Sigmoid colon (tissue), 7 donors: ENCODE measurements at regions of chr2 and their contacts with region 1.

Region 1: DNA sequence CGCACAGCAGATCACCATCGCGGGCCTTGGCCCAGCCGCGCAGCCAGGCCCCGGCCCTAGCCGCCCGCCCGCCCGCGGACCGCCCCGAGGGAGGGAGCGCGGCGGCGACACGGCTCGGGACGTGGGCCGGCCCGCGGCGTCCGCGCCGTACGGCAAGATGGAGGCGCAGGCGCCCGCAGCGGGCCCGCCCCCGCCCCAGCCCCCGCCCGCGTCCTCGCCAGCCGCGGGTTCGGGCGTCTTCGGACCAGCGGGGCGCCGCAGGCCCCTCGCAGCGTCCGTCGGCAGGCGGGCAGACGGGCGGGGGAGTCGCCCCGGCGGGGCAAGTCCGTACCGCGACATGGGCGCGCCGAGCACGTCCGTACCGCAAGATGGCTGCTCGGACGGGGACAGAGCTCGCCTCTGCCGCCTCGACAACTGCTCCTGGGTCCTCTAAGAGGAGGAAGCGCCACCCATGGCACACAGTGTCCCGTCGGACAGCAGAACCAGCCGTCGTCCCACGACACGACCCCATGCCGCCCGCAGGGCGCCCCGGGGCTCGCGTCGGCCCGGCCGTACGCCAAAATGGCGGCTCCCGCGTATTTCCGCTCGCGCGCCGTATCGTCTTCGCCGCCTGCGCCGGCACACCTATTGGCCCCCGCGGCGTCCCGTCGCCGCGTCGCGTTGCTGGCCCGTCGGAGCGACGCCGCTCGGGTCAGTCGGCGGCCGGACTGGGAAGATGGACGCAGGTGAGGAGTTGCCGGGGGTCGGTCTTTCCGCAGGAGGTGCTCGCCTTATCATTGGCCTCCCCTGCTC is at the starts of genes ATG4B and THAP4:
- DNase-seq: peak; percentile 91
- H3K4me3 ChIP-seq: peak within 1 kb of the TSS; percentile 57 to 95 (median 81)
- H3K27ac ChIP-seq: peak within 1 kb of the TSS; percentile 90 to 99 (median 94)
- H3K4me1 ChIP-seq: peaks cover 0 to 66% (median 59%) of the 10 kb centered on the region in 4 donors
- H3K27me3 ChIP-seq: no peaks in the 10 kb centered on the region
- CTCF ChIP-seq: no peak
- EP300 ChIP-seq: no peak
- POLR2A ChIP-seq: peak; percentile 25 to 41
- total RNA-seq, gene ATG4B: 35.2 to 69.8 (median 45.2) TPM
- total RNA-seq, gene THAP4: 28.9 to 44.7 (median 38.4) TPM

Region 2: GRCh38 chr2:239831001-239831731 is 1806.0 kb before region 1 on chr2:
- intact Hi-C with region 1: no loop called
- DNase-seq: peak; percentile 63
- H3K4me3 ChIP-seq: no peak overlapping the region
- H3K27ac ChIP-seq: no peak overlapping the region
- H3K4me1 ChIP-seq: peaks cover 0 to 32% (median 22%) of the 10 kb centered on the region in 4 donors
- H3K27me3 ChIP-seq: no peaks in the 10 kb centered on the region
- CTCF ChIP-seq: no peak
- EP300 ChIP-seq: no peak
- POLR2A ChIP-seq: no peak

Region 3: DNA sequence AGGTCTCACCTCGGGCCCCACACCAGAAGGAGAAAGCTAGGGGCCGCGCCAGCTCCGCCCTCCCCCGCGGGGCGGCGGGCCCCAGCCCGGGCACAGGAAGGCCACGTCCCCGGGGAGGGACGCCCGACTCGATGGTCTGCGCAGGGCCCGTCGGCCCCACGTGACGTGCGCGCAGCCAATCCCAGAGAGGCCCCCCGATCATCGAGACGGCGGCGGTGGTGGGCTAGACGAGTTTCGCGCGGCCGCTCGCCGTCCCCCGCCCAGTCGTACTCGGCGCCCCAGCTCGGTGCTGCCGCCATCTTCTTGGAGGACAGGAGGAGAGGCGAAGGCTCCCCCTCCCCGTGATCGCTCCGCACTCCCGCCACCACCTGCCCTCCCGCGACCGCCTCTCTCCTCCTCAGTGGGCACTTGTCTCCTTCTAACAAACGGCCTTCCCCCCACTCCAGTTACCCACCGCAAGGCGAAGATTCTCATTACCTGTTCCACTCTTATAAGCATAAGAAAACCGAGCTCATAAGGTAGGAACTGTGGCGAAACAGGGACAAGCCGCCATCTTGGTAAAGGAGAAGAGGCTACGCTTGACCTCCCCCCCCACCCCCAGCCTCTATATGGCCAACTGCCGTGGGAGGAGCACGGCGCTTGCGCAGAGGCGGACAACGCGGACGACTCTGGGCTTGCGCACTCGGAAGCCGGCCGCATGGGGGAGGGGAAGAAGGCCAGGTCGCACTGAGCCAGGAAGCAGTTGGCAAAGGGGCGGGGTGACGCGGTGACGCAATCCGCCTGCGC is 321.9 kb before region 1 on chr2 and contains the start of gene HDLBP:
- intact Hi-C with region 1: loop called (anchors 2 kb)
- DNase-seq: peak; percentile 99
- H3K4me3 ChIP-seq: peak within 1 kb of the TSS; percentile 73 to 93 (median 89)
- H3K27ac ChIP-seq: peak within 1 kb of the TSS; percentile 97 to 99 (median 98)
- H3K4me1 ChIP-seq: peaks cover 0 to 69% (median 55%) of the 10 kb centered on the region in 4 donors
- H3K27me3 ChIP-seq: no peaks in the 10 kb centered on the region
- CTCF ChIP-seq: no peak
- EP300 ChIP-seq: peak in 1 of 4 donors; percentile 80
- POLR2A ChIP-seq: peak; percentile 52 to 69
- total RNA-seq, gene HDLBP: 201 to 281 (median 247) TPM

Region 4: GRCh38 chr2:241508240-241509154 is 128.7 kb before region 1 on chr2 and contains the start of gene STK25:
- intact Hi-C with region 1: loop called (anchors 1 kb)
- DNase-seq: peak; percentile 99
- H3K4me3 ChIP-seq: peak within 1 kb of the TSS; percentile 65 to 99 (median 76)
- H3K27ac ChIP-seq: peak within 1 kb of the TSS; percentile 82 to 91 (median 90)
- H3K4me1 ChIP-seq: peaks cover 0 to 43% (median 40%) of the 10 kb centered on the region in 4 donors
- H3K27me3 ChIP-seq: no peaks in the 10 kb centered on the region
- CTCF ChIP-seq: peak in 1 of 4 experiments; percentile 2
- EP300 ChIP-seq: peak in 1 of 4 donors; percentile 38
- POLR2A ChIP-seq: peak in 1 of 2 donors; percentile 29
- total RNA-seq, gene STK25: 125 to 266 (median 178) TPM

Region 5: GRCh38 chr2:241558532-241559322 is 78.5 kb before region 1 on chr2 and contains the start of gene BOK:
- intact Hi-C with region 1: loop called (anchors 5 kb)
- DNase-seq: peak; percentile 93
- H3K4me3 ChIP-seq: peak within 1 kb of the TSS; percentile 57 to 87 (median 70)
- H3K27ac ChIP-seq: peak within 1 kb of the TSS; percentile 80 to 94 (median 90)
- H3K4me1 ChIP-seq: peaks cover 0 to 52% (median 48%) of the 10 kb centered on the region in 4 donors
- H3K27me3 ChIP-seq: no peaks in the 10 kb centered on the region
- CTCF ChIP-seq: no peak
- EP300 ChIP-seq: no peak
- POLR2A ChIP-seq: no peak
- total RNA-seq, gene BOK: 46.6 to 112 (median 81.0) TPM

Region 6: GRCh38 chr2:241609859-241610793 is 27.1 kb before region 1 on chr2:
- intact Hi-C with region 1: loop called (anchors 1 kb)
- DNase-seq: peak; percentile 93
- H3K4me3 ChIP-seq: peak overlapping the region; percentile 45 to 67 (median 66)
- H3K27ac ChIP-seq: peak overlapping the region; percentile 80 to 84 (median 84)
- H3K4me1 ChIP-seq: peaks cover 0 to 26% (median 23%) of the 10 kb centered on the region in 4 donors
- H3K27me3 ChIP-seq: no peaks in the 10 kb centered on the region
- CTCF ChIP-seq: peak in 3 of 4 experiments; percentile 21 to 73 (median 45)
- EP300 ChIP-seq: no peak
- POLR2A ChIP-seq: peak in 1 of 2 donors; percentile 8

Region 7: GRCh38 chr2:241686649-241687425 is 49.6 kb after region 1 on chr2 and contains the start of gene DTYMK:
- intact Hi-C with region 1: loop called (anchors 2 kb)
- DNase-seq: peak; percentile 98
- H3K4me3 ChIP-seq: peak within 1 kb of the TSS; percentile 79 to 95 (median 84)
- H3K27ac ChIP-seq: peak within 1 kb of the TSS; percentile 93 to 95 (median 94)
- H3K4me1 ChIP-seq: peaks cover 0 to 34% (median 25%) of the 10 kb centered on the region in 4 donors
- H3K27me3 ChIP-seq: no peaks in the 10 kb centered on the region
- CTCF ChIP-seq: no peak
- EP300 ChIP-seq: no peak
- POLR2A ChIP-seq: peak; percentile 18 to 37
- total RNA-seq, gene DTYMK: 7.4 to 13.8 (median 10.8) TPM

Region 8: GRCh38 chr2:241702132-241703031 is 65.2 kb after region 1 on chr2:
- intact Hi-C with region 1: loop called (anchors 5 kb)
- DNase-seq: peak; percentile 94
- H3K4me3 ChIP-seq: peak overlapping the region; percentile 67 to 91 (median 86)
- H3K27ac ChIP-seq: peak overlapping the region; percentile 86 to 95 (median 93)
- H3K4me1 ChIP-seq: peaks cover 0 to 25% (median 18%) of the 10 kb centered on the region in 4 donors
- H3K27me3 ChIP-seq: no peaks in the 10 kb centered on the region
- CTCF ChIP-seq: peak in 1 of 4 experiments; percentile 23
- EP300 ChIP-seq: no peak
- POLR2A ChIP-seq: no peak